B cell (primary cell): ENCODE measurements at regions of chr16 and their contacts with region 1.

Region 1: GRCh38 chr16:48156790-48157209 is 1.0 kb upstream of the ABCC12 start:
- DNase-seq: peak; percentile 82
- ATAC-seq: peak; percentile 49
- H3K4me3 ChIP-seq: no peak overlapping the region
- H3K4me3 Mint-ChIP-seq: no peak overlapping the region
- H3K27ac ChIP-seq: no peak overlapping the region
- H3K27ac Mint-ChIP-seq: no peak overlapping the region
- H3K4me1 ChIP-seq: peaks cover 0 to 6% of the 10 kb centered on the region in 2 donors
- H3K4me1 Mint-ChIP-seq: no peaks in the 10 kb centered on the region
- H3K27me3 ChIP-seq: peaks cover 0 to 10% (median 2%) of the 10 kb centered on the region in 4 experiments
- H3K27me3 Mint-ChIP-seq: peaks cover 28% of the 10 kb centered on the region
- CTCF ChIP-seq: peak; percentile 95

Region 2: DNA sequence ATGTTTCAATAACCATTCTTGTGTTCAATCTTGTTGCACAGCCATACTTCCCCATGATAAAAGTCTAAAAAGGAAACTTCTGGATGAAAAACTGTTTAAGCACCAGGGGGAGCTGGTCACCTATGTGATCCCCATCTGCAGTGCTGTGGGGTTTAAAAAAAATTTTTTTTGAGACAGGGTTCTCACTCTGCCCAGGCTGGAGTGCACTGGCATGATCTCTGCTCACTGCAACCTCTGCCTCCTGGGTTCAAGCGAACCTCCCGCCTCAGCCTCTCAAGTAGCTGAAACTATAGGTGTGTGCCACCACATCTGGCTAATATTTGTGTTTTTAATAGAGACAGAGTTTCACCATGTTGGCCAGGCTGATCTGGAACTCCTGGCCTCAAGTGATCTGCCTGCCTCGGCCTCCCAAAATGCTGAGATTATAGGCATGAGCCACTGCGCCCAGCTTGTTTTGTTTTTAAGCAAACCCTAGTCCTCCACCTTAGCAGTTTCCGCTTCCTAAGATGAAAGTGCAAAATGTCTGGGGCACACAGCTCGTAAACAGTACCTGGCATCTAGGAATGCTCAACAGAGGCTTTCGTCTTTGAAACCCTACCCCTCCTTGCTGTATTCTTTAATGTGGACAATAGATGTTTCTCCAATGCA is 1208.8 kb before region 1 on chr16:
- CTCF ChIA-PET with region 1: interaction called, 7 read pairs
- POLR2A ChIA-PET with region 1: no interaction called
- intact Hi-C with region 1: loop called (anchors 1 kb)
- DNase-seq: peak; percentile 68
- ATAC-seq: peak; percentile 63
- H3K4me3 ChIP-seq: no peak overlapping the region
- H3K4me3 Mint-ChIP-seq: no peak overlapping the region
- H3K27ac ChIP-seq: no peak overlapping the region
- H3K27ac Mint-ChIP-seq: no peak overlapping the region
- H3K4me1 ChIP-seq: peaks cover 0 to 3% of the 10 kb centered on the region in 2 donors
- H3K4me1 Mint-ChIP-seq: peaks cover 6% of the 10 kb centered on the region
- H3K27me3 ChIP-seq: no peaks in the 10 kb centered on the region
- H3K27me3 Mint-ChIP-seq: no peaks in the 10 kb centered on the region
- CTCF ChIP-seq: peak; percentile 75

Region 3: GRCh38 chr16:48029768-48030167 is 127.0 kb before region 1 on chr16:
- CTCF ChIA-PET with region 1: no interaction called
- POLR2A ChIA-PET with region 1: no interaction called
- intact Hi-C with region 1: no loop called
- DNase-seq: no peak
- ATAC-seq: no peak
- H3K4me3 ChIP-seq: no peak overlapping the region
- H3K4me3 Mint-ChIP-seq: no peak overlapping the region
- H3K27ac ChIP-seq: no peak overlapping the region
- H3K27ac Mint-ChIP-seq: no peak overlapping the region
- H3K4me1 ChIP-seq: no peaks in the 10 kb centered on the region
- H3K4me1 Mint-ChIP-seq: no peaks in the 10 kb centered on the region
- H3K27me3 ChIP-seq: peaks cover 0 to 7% (median 3%) of the 10 kb centered on the region in 4 experiments
- H3K27me3 Mint-ChIP-seq: peaks cover 10% of the 10 kb centered on the region
- CTCF ChIP-seq: no peak

Region 4: GRCh38 chr16:48117217-48118105 is 39.3 kb before region 1 on chr16:
- CTCF ChIA-PET with region 1: no interaction called
- POLR2A ChIA-PET with region 1: no interaction called
- intact Hi-C with region 1: no loop called
- DNase-seq: peak; percentile 63
- ATAC-seq: peak; percentile 67
- H3K4me3 ChIP-seq: no peak overlapping the region
- H3K4me3 Mint-ChIP-seq: no peak overlapping the region
- H3K27ac ChIP-seq: no peak overlapping the region
- H3K27ac Mint-ChIP-seq: no peak overlapping the region
- H3K4me1 ChIP-seq: no peaks in the 10 kb centered on the region
- H3K4me1 Mint-ChIP-seq: no peaks in the 10 kb centered on the region
- H3K27me3 ChIP-seq: no peaks in the 10 kb centered on the region
- H3K27me3 Mint-ChIP-seq: peaks cover 6% of the 10 kb centered on the region
- CTCF ChIP-seq: peak; percentile 74

Region 5: GRCh38 chr16:48180868-48181480 is 24.2 kb after region 1 on chr16:
- CTCF ChIA-PET with region 1: no interaction called
- POLR2A ChIA-PET with region 1: no interaction called
- intact Hi-C with region 1: no loop called
- DNase-seq: no peak
- ATAC-seq: no peak
- H3K4me3 ChIP-seq: no peak overlapping the region
- H3K4me3 Mint-ChIP-seq: no peak overlapping the region
- H3K27ac ChIP-seq: no peak overlapping the region
- H3K27ac Mint-ChIP-seq: no peak overlapping the region
- H3K4me1 ChIP-seq: no peaks in the 10 kb centered on the region
- H3K4me1 Mint-ChIP-seq: no peaks in the 10 kb centered on the region
- H3K27me3 ChIP-seq: peaks cover 0 to 2% (median 0%) of the 10 kb centered on the region in 4 experiments
- H3K27me3 Mint-ChIP-seq: peaks cover 6% of the 10 kb centered on the region
- CTCF ChIP-seq: no peak